H1 (cell line): ENCODE measurements at regions of chr5 and their contacts with region 1.

Region 1: GRCh38 chr5:9924614-9925013 is 294.5 kb upstream of the TAS2R1 start:
- DNase-seq: no peak
- H3K4me3 ChIP-seq: no peak overlapping the region
- H3K27ac ChIP-seq: no peak overlapping the region
- H3K4me1 ChIP-seq: peaks cover 0 to 8% (median 1%) of the 10 kb centered on the region in 4 experiments; a peak in 4 of 7 replicates
- H3K27me3 ChIP-seq: peaks cover 0 to 1% (median 0%) of the 10 kb centered on the region in 4 experiments; a peak in 2 of 7 replicates
- CTCF ChIP-seq: no peak
- EP300 ChIP-seq: no peak
- POLR2A ChIP-seq: no peak
- RAD21 ChIP-seq: no peak

Region 2: DNA sequence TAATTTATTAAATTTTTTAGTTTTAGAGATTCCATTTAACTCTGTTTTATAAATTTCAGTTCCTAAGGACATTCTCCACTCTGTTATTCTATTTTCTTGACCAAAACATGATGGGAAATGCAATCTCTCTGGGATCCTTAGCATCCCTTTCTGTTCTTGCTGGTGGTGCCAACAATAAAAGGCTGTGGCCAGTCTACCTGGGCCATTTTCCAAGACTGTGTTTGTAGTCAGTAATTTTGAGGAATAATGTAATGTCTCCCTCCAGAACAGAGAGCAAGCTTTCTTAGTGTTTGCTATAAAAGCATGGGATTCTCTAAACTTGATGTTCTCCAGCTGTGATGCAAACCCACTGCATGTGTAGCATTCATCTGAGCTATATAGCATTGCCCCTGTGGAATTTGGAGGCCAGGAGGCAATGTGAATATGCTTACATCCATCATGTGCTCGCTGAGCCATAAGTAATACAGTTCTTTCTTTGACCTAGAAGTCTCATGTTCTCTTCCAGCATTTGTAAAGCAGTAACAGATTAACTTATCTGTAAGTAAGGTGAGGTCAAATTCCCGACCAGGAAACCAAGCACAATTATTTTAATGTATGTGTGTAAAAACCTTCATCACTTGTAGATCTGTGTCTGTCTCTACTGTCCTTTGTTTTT is 83.0 kb before region 1 on chr5:
- CTCF ChIA-PET with region 1: no interaction called
- POLR2A ChIA-PET with region 1: no interaction called
- DNase-seq: no peak
- H3K4me3 ChIP-seq: no peak overlapping the region
- H3K27ac ChIP-seq: no peak overlapping the region
- H3K4me1 ChIP-seq: no peaks in the 10 kb centered on the region
- H3K27me3 ChIP-seq: no peaks in the 10 kb centered on the region
- CTCF ChIP-seq: no peak
- EP300 ChIP-seq: no peak
- POLR2A ChIP-seq: no peak
- RAD21 ChIP-seq: no peak

Region 3: GRCh38 chr5:10151656-10152055 is 227.0 kb after region 1 on chr5:
- CTCF ChIA-PET with region 1: interaction called, 11 read pairs
- POLR2A ChIA-PET with region 1: no interaction called
- DNase-seq: no peak
- H3K4me3 ChIP-seq: no peak overlapping the region
- H3K27ac ChIP-seq: no peak overlapping the region
- H3K4me1 ChIP-seq: peaks cover 0 to 1% (median under 1%) of the 10 kb centered on the region in 4 experiments; a peak in 1 of 7 replicates
- H3K27me3 ChIP-seq: no peaks in the 10 kb centered on the region
- CTCF ChIP-seq: no peak
- EP300 ChIP-seq: no peak
- POLR2A ChIP-seq: no peak
- RAD21 ChIP-seq: no peak